HEK293 (cell line): ENCODE measurements at regions of chr1 and their contacts with region 1.

Region 1: GRCh38 chr1:47262787-47263413 is 30.9 kb upstream of the TAL1 start:
- H3K4me3 ChIP-seq: no peak overlapping the region
- H3K27ac ChIP-seq: no peak overlapping the region
- H3K4me1 ChIP-seq: no peaks in the 10 kb centered on the region
- CTCF ChIP-seq: no peak

Region 2: DNA sequence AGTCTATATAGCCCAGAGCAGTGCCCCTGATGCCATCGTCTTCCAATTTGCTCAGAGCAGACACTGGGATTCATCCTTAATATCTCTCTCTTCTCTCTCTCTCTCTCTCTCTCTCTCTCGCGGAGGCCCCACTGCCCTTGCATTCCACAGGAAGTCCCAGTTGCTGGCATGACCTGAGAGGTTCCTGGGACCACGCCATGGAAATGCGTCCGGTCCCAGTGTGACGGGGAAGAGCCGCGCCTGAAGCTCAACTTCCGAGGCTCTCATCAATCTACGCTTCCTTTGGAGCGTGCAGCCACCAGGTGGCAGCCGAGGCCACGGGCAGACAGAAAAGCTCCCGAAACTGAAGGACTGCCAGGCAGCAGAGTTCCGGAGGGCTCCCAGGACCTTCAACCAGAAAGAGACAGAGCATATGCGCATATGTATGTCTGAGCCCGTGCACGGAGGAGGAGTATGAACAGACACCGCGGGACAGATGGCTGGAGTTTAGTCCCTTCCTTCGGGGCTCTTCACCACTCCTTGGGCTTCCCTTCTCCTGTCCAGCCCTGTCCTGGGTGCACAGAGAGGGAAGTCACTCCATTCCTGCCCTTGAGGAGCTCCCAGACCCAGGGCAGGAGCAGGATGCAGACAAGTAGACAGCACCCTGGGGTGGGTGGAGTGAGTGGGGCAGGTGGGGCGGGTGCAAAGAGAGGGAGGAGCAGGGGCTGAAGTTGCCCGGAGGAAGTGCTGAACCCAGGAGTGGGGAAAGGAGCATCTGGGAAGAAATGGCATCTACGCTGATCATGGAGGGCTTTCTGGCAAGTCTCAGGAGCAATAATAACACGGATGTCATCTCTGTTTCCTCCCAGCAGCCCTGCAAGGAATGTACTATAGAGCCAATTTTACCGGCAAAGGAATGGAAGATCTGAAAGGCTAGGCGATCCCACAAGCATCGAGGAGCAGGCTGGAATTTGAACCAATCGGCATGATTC is 83.6 kb before region 1 on chr1:
- CTCF ChIA-PET with region 1: interaction called, 52 read pairs
- POLR2A ChIA-PET with region 1: interaction called, 11 read pairs
- H3K4me3 ChIP-seq: peak overlapping the region; percentile 38
- H3K27ac ChIP-seq: no peak overlapping the region
- H3K4me1 ChIP-seq: no peaks in the 10 kb centered on the region
- CTCF ChIP-seq: peak; percentile 91

Region 3: GRCh38 chr1:47192458-47193384 is 70.2 kb before region 1 on chr1:
- CTCF ChIA-PET with region 1: interaction called, 136 read pairs
- POLR2A ChIA-PET with region 1: no interaction called
- H3K4me3 ChIP-seq: no peak overlapping the region
- H3K27ac ChIP-seq: no peak overlapping the region
- H3K4me1 ChIP-seq: no peaks in the 10 kb centered on the region
- CTCF ChIP-seq: peak; percentile 87

Region 4: DNA sequence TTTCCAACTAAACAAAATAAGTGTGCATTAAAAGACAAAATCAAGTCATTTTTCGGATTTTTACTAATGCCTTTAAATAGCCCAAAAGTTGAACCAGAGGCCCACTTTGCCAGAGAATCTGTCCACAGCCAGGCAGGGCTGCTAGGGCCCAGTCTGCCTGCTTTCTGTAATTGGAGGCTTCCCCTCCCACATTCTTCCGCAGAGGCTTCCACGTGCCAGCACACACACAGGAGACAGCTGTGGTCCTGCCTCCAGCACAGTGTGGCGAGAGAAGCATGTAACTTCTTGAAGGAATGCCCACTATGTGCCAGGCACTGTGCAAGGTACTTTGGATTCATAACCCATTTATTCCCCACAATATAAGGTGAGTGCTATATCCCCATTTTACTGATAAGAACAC is 61.7 kb before region 1 on chr1:
- CTCF ChIA-PET with region 1: interaction called, 14 read pairs
- POLR2A ChIA-PET with region 1: no interaction called
- H3K4me3 ChIP-seq: no peak overlapping the region
- H3K27ac ChIP-seq: no peak overlapping the region
- H3K4me1 ChIP-seq: no peaks in the 10 kb centered on the region
- CTCF ChIP-seq: no peak

Region 5: GRCh38 chr1:47243910-47244309 is 19.0 kb before region 1 on chr1:
- CTCF ChIA-PET with region 1: interaction called, 12 read pairs
- POLR2A ChIA-PET with region 1: no interaction called
- H3K4me3 ChIP-seq: no peak overlapping the region
- H3K27ac ChIP-seq: no peak overlapping the region
- H3K4me1 ChIP-seq: no peaks in the 10 kb centered on the region
- CTCF ChIP-seq: no peak

Region 6: DNA sequence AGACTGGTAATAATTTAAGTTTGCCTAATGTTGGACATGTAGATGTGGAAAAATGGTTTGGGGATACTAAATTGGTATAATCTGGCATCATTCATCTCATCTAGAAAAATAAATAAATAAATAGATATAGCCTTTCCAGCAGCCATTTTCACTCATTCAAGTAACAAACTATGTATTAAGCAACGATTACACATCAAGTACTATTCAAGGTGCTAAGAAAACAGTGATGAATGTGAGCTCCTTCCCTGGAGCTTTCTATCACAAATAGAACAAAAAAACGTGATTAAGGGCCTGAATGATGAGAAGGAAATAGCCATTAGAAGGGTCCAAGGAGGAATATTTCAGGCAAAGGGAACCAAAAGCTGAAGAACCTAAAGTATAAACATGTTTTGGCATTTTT is 13.9 kb after region 1 on chr1:
- CTCF ChIA-PET with region 1: interaction called, 16 read pairs
- POLR2A ChIA-PET with region 1: interaction called, 3 read pairs
- H3K4me3 ChIP-seq: no peak overlapping the region
- H3K27ac ChIP-seq: no peak overlapping the region
- H3K4me1 ChIP-seq: no peaks in the 10 kb centered on the region
- CTCF ChIP-seq: no peak

Region 7: DNA sequence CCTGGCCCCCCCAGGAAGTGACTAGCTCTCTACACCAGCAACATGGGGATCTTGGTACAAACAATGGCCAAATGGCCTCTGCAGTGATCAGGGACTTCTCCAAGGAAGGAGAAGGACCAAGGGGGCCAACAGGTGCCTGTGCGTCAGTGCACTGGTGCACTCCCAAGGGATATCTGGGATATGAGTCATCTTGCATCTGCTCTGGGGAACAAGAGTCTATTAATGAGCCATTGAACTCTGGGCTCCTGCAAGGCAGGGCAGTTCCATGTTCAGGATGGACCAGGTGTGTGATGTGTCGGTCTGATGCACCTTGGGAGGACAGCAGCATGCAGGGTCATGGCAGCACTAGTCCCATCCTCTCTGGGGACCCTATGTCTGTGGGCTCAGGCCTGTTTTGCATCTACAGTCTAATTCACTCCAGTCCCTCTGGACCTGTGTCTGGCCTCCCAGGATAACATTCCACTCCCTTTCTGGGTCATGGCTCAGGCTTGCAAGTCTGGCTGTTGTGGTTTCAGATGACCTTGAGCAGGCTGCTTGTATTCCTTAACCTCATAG is 609.0 kb after region 1 on chr1:
- CTCF ChIA-PET with region 1: no interaction called
- POLR2A ChIA-PET with region 1: no interaction called
- H3K4me3 ChIP-seq: no peak overlapping the region
- H3K27ac ChIP-seq: no peak overlapping the region
- H3K4me1 ChIP-seq: no peaks in the 10 kb centered on the region
- CTCF ChIP-seq: no peak